Breast epithelium (tissue), 4 donors: ENCODE measurements at regions of chr13 and their contacts with region 1.

Region 1: DNA sequence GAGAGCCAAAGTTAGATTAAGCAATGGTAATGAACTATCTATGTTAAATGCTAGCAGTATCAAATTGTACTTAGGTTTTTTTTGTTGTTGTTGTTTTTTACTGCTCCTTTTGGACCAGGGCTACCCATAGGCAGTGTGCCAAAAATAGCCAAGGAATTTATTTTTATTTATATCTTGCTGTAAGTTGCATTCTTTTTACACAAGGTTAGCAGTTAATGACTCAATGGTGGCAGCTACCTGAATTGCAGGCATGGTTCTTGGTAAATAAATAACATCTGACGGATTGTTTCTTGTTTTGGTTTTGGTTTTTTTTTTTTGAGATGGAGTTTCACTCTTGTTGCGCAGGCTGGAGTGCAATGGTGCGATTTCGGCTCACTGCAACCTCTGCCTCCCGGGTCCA is 194.8 kb upstream of the TSC22D1 start:
- DNase-seq: no peak
- H3K4me3 ChIP-seq: no peak overlapping the region
- H3K27ac ChIP-seq: no peak overlapping the region
- H3K4me1 ChIP-seq: no peaks in the 10 kb centered on the region
- H3K27me3 ChIP-seq: no peaks in the 10 kb centered on the region
- CTCF ChIP-seq: no peak
- POLR2A ChIP-seq: no peak

Region 2: DNA sequence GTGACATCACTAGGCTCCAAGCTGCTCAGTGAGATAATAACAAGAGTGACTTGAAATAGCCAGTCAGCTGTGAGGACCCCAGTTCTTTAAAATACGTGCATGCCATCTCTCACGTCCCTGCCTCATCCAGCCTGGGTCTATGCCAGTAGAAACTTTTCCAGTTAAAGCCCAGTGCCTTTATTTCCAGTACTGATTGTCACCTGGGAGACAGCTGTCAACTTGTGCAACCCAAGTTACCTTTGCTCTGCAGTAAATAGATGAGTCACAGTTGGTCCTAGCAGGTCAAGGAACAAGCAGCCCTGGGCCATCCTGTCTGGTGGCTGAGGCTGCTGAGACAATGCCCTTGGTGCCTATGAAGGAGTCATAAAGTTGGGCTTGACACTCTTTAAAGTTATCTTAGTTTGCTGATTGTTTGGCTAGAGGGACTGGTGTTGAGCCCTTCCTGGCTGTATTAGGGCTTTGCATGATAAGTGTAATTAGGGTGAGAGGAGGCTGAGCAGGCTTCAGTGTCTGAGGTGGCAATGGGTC is 662.6 kb before region 1 on chr13:
- intact Hi-C with region 1: no loop called
- DNase-seq: peak; percentile 46 to 54
- H3K4me3 ChIP-seq: no peak overlapping the region
- H3K27ac ChIP-seq: peak overlapping the region; percentile 31 to 45
- H3K4me1 ChIP-seq: peaks cover 0 to 12% of the 10 kb centered on the region in 2 donors
- H3K27me3 ChIP-seq: no peaks in the 10 kb centered on the region
- CTCF ChIP-seq: no peak
- POLR2A ChIP-seq: no peak

Region 3: DNA sequence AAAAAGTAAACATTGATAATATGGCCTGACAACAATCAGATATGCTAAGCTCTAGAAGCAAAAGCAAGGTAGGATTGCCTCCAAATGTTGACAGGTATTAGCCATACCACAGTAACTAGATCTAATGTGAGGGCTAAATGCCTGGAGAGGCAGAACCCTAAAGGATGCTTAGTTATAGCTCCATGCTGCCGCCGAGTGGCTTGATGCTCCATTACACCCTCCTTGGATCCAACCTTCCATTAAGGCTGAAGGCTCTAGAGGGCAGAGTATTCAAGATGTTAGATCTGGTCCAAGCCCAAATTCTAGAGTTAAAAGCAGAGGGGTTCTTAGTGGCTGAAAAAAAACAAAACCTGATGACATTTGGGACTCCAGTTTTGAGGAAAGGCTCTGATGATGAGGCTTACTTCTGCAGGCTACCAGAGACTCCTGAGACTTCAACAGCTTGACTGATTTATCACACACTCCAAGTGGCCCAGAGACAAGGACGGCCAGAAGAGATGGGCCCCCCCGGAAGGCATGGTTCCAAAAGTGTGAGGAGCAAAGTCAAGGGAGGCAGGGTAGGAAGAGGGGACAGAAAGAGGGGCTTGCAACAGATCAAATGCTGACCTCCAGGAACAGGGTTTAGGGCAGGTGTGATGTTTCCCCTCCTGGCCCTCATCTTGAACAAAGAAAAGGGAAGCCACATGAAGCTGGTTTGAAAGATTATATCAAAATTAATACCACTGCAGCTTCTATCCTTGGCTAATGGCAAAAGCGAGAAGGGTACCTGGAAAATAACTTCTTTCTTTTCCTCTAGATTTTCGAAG is 1355.8 kb after region 1 on chr13:
- intact Hi-C with region 1: loop called (anchors 10 kb)
- DNase-seq: peak; percentile 46 to 73
- H3K4me3 ChIP-seq: no peak overlapping the region
- H3K27ac ChIP-seq: no peak overlapping the region
- H3K4me1 ChIP-seq: no peaks in the 10 kb centered on the region
- H3K27me3 ChIP-seq: no peaks in the 10 kb centered on the region
- CTCF ChIP-seq: peak; percentile 39 to 79 (median 63)
- POLR2A ChIP-seq: no peak